Endothelial cell of umbilical vein (primary cell): ENCODE measurements at regions of chr13 and their contacts with region 1.

Region 1: DNA sequence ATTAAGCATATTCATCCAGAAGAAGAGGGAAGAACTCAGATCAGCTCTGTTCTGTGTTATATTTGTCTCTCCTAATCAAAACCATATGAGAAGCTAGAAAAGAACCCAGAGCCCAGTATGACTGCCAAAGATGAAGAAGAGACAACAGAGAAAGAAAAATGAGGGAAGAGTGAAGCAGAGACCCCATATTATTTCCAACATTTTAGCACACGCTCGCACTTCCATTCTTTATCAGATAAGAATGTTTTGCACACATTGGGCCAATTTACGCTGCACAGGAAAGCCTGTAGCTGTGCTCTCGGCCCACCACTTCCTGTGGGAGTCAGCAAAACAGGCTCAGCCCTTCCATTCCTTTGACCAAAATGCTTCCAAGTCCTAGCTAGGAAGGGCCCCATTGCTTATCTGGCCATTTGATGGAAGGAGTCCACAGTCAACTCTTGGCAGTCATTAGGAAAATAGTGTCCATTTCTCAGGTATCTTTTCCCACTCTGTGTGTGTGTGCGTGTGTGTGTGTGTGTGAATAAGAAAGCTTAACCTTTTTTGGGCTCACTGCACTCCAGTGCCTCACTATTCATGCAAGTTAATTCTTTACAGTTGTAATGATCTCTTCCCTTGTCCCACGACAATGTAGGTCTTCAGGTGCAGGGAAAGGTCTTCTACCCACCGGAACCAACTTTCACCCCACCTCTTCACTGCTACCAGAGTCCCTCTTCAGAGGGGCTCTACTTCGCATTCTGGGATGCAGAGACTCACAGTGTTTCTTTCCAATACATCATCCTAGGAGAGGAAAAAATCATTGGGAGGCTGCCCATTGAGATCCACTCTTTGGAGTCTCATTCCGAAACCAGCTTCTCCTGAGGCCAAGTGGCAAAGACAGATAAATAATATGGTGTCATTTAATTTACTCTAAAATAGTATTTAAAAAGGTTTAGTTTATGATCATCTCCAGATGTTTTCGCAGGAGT is 237.5 kb downstream of the COG6 start:
- DNase-seq: peak; percentile 95
- H3K4me3 ChIP-seq: peak overlapping the region in 1 of 3 experiments; percentile 6
- H3K27ac ChIP-seq: peak overlapping the region; percentile 86
- H3K4me1 ChIP-seq: peaks cover 52% of the 10 kb centered on the region
- H3K27me3 ChIP-seq: no peaks in the 10 kb centered on the region
- CTCF ChIP-seq: no peak
- POLR2A ChIP-seq: no peak

Region 2: GRCh38 chr13:39577838-39578491 is 315.0 kb before region 1 on chr13:
- CTCF ChIA-PET with region 1: no interaction called
- POLR2A ChIA-PET with region 1: no interaction called
- dilution Hi-C with region 1: no loop called
- intact Hi-C with region 1: no loop called
- DNase-seq: no peak
- H3K4me3 ChIP-seq: no peak overlapping the region
- H3K27ac ChIP-seq: no peak overlapping the region
- H3K4me1 ChIP-seq: no peaks in the 10 kb centered on the region
- H3K27me3 ChIP-seq: no peaks in the 10 kb centered on the region
- CTCF ChIP-seq: no peak
- POLR2A ChIP-seq: no peak

Region 3: DNA sequence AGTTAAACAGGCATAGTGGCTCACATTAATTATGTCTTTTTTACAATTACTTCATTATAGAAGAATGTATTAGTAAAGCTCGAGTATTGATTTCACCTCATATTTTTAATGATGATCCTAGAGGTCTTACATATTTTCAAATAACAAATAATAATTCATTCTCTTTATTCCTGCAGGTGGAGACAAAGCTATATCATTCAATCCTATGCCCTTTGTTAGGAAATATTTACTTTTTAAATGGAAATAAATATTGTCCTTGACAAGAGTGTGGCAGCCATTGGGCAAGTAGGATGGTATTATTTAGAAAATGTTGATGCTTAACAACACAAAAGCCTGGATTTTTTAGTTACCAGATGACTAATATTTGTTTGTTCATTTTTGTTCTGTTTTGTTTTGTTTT is 110.0 kb before region 1 on chr13:
- CTCF ChIA-PET with region 1: interaction called, 8 read pairs
- POLR2A ChIA-PET with region 1: interaction called, 4 read pairs
- dilution Hi-C with region 1: no loop called
- intact Hi-C with region 1: loop called (anchors 1 kb)
- DNase-seq: peak; percentile 80
- H3K4me3 ChIP-seq: no peak overlapping the region
- H3K27ac ChIP-seq: no peak overlapping the region
- H3K4me1 ChIP-seq: peaks cover 62% of the 10 kb centered on the region
- H3K27me3 ChIP-seq: no peaks in the 10 kb centered on the region
- CTCF ChIP-seq: no peak
- POLR2A ChIP-seq: no peak

Region 4: GRCh38 chr13:39862900-39863299 is 30.1 kb before region 1 on chr13:
- CTCF ChIA-PET with region 1: interaction called, 3 read pairs
- POLR2A ChIA-PET with region 1: interaction called, 3 read pairs
- dilution Hi-C with region 1: no loop called
- intact Hi-C with region 1: loop called (anchors 1 kb)
- DNase-seq: peak; percentile 83
- H3K4me3 ChIP-seq: no peak overlapping the region
- H3K27ac ChIP-seq: peak overlapping the region; percentile 76
- H3K4me1 ChIP-seq: peaks cover 37% of the 10 kb centered on the region
- H3K27me3 ChIP-seq: no peaks in the 10 kb centered on the region
- CTCF ChIP-seq: no peak
- POLR2A ChIP-seq: no peak

Region 5: DNA sequence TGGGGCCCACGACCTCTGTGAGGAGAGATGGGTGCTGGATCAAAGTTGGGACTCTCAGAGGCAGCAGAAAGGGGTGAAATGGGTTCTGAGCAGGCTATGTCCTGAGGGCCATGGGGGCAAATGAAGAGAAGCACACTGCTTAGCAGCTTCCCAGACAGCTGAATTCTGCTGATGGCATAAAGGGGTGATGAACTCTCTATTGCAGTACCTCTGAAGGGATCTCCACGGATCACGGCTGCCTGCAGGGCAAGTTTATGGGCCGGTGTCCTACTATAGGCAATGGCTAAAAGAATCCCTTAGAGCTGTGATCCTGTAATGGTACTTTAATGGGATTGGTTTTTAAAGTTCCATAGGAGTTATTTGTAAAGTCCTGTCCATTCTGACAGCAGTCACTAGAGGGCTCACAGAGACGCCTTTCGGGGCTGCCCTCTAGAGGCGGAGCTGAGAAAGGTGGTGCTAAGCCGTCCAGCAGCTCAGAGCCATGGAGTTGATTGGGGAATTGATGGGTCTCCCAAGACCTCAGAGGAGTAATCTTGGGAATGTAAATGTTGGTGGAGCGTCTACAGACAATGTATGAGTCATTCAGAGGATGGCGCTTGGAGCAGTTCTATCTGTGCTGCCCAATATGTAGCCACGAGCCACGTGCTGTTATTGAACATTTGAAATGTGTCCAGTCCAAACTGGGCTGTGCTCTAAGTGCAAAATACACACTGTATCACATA is 49.7 kb after region 1 on chr13:
- CTCF ChIA-PET with region 1: interaction called, 8 read pairs
- POLR2A ChIA-PET with region 1: no interaction called
- dilution Hi-C with region 1: no loop called
- intact Hi-C with region 1: loop called (anchors 2 kb)
- DNase-seq: peak; percentile 71
- H3K4me3 ChIP-seq: no peak overlapping the region
- H3K27ac ChIP-seq: no peak overlapping the region
- H3K4me1 ChIP-seq: peaks cover 3% of the 10 kb centered on the region
- H3K27me3 ChIP-seq: no peaks in the 10 kb centered on the region
- CTCF ChIP-seq: peak; percentile 86 to 94
- POLR2A ChIP-seq: no peak

Region 6: DNA sequence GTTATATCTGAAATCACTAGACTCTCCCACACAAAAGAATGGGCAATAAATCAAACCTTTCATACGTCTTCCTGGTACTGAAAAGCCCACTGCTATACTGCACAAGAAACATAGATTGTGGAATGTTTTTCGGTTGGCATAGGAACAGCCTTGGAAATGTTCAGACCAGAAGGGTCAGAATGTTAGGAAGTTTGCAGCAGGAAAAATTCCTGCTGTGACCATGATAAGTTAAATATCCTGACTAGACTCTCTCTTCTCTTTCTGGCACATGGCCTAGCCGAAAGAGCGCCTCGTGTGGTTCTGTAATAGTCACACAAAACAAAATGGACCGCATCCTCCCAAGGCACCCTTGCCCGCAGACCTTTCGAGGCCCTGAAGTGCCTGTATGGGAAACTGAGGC is 189.6 kb after region 1 on chr13:
- CTCF ChIA-PET with region 1: no interaction called
- POLR2A ChIA-PET with region 1: no interaction called
- dilution Hi-C with region 1: no loop called
- intact Hi-C with region 1: loop called (anchors 1 kb)
- DNase-seq: peak; percentile 99
- H3K4me3 ChIP-seq: no peak overlapping the region
- H3K27ac ChIP-seq: peak overlapping the region; percentile 71
- H3K4me1 ChIP-seq: peaks cover 11% of the 10 kb centered on the region
- H3K27me3 ChIP-seq: no peaks in the 10 kb centered on the region
- CTCF ChIP-seq: peak; percentile 30 to 62
- POLR2A ChIP-seq: no peak

Region 7: DNA sequence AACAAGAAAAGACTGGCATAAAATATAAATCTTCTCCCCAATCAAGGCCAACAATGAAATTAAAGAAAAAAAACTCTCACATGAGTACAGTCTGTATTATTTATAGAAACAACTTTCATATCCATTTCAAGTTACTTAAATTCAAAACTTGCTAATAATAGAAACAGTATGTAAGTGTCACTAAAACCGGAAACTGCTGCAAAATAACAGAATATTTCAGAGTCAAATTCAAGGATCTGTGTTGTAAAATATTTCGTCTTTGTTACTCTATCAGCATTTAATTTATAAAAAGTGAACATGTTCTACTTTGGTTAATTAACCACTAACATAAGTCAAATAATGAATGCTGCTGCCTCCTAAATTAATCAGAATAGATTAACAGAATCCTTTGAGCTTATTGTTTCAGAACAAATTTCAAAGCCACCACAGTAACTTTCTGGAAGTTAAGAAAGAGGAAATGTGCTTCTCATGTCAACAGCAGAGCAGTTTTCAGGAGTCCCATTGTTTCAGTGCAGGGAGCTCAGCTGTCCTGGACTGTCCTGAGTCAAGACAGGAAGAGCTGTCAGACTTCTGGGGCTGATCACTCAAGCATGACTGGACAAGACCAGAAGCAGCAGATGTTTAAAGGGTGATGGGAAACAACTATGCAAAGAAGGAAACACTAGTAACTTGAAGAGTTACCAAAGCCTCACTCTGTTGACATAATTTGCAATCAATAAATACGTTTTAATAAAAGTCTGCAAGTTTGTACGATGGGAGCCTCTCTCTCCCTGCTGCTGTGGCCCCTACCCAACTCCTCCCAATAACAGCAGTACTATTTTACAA is 696.5 kb after region 1 on chr13:
- CTCF ChIA-PET with region 1: no interaction called
- POLR2A ChIA-PET with region 1: no interaction called
- dilution Hi-C with region 1: no loop called
- intact Hi-C with region 1: loop called (anchors 5 kb)
- DNase-seq: peak; percentile 94
- H3K4me3 ChIP-seq: peak overlapping the region in 1 of 3 experiments; percentile 14
- H3K27ac ChIP-seq: peak overlapping the region; percentile 87
- H3K4me1 ChIP-seq: peaks cover 69% of the 10 kb centered on the region
- H3K27me3 ChIP-seq: no peaks in the 10 kb centered on the region
- CTCF ChIP-seq: no peak
- POLR2A ChIP-seq: peak; percentile 57